OCI-LY7 (cell line): ENCODE measurements at regions of chr3 and their contacts with region 1.

Region 1: GRCh38 chr3:188154014-188154808 is at the start of gene LPP:
- DNase-seq: peak; percentile 79
- H3K4me3 ChIP-seq: peak within 1 kb of the TSS; percentile 82
- H3K27ac ChIP-seq: peak within 1 kb of the TSS; percentile 41
- H3K4me1 ChIP-seq: peaks cover 35% of the 10 kb centered on the region
- CTCF ChIP-seq: no peak; the same call in 1 of the 2 replicates
- total RNA-seq, gene LPP: 7.4 and 10.9 TPM in 2 replicates

Region 2: GRCh38 chr3:188000361-188000861 is 153.8 kb before region 1 on chr3:
- CTCF ChIA-PET with region 1: no interaction called
- POLR2A ChIA-PET with region 1: no interaction called
- intact Hi-C with region 1: loop called (anchors 5 kb)
- DNase-seq: peak; percentile 82
- H3K4me3 ChIP-seq: peak overlapping the region; percentile 60
- H3K27ac ChIP-seq: peak overlapping the region; percentile 96
- H3K4me1 ChIP-seq: peaks cover 83% of the 10 kb centered on the region
- CTCF ChIP-seq: no peak

Region 3: GRCh38 chr3:188137051-188137450 is 17.2 kb before region 1 on chr3:
- CTCF ChIA-PET with region 1: no interaction called
- POLR2A ChIA-PET with region 1: interaction called, 15 read pairs
- intact Hi-C with region 1: no loop called
- DNase-seq: peak; percentile 49
- H3K4me3 ChIP-seq: no peak overlapping the region
- H3K27ac ChIP-seq: no peak overlapping the region
- H3K4me1 ChIP-seq: peaks cover 14% of the 10 kb centered on the region
- CTCF ChIP-seq: no peak

Region 4: DNA sequence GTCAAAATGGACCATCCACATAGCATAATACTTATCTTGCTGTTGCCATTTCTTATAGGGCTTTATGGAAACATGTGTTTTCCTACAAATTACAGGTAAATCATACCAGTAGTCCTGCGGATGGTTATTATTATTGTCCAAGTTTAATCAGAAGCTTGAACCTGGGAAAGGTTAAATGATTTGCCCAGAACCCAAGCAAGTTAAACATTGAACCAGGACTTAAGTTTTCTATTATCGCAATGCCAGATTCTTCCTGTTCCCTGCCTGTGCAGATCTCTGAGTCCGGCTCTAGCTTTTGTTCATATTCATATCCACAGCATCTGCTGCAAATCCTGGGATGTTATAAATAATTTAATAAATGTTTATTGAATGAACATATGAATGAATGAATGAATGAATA is 12.2 kb after region 1 on chr3:
- CTCF ChIA-PET with region 1: no interaction called
- POLR2A ChIA-PET with region 1: interaction called, 10 read pairs
- intact Hi-C with region 1: no loop called
- DNase-seq: no peak
- H3K4me3 ChIP-seq: no peak overlapping the region
- H3K27ac ChIP-seq: no peak overlapping the region
- H3K4me1 ChIP-seq: peaks cover 41% of the 10 kb centered on the region
- CTCF ChIP-seq: no peak

Region 5: GRCh38 chr3:188214442-188214841 is 60.2 kb after region 1 on chr3:
- CTCF ChIA-PET with region 1: no interaction called
- POLR2A ChIA-PET with region 1: interaction called, 3 read pairs
- intact Hi-C with region 1: loop called (anchors 5 kb)
- DNase-seq: peak; percentile 82
- H3K4me3 ChIP-seq: peak overlapping the region; percentile 47
- H3K27ac ChIP-seq: peak overlapping the region; percentile 98
- H3K4me1 ChIP-seq: peaks cover 80% of the 10 kb centered on the region
- CTCF ChIP-seq: no peak

Region 6: GRCh38 chr3:188234132-188234531 is 79.9 kb after region 1 on chr3:
- CTCF ChIA-PET with region 1: no interaction called
- POLR2A ChIA-PET with region 1: interaction called, 4 read pairs
- intact Hi-C with region 1: loop called (anchors 2 kb)
- DNase-seq: no peak
- H3K4me3 ChIP-seq: no peak overlapping the region
- H3K27ac ChIP-seq: no peak overlapping the region
- H3K4me1 ChIP-seq: peaks cover 77% of the 10 kb centered on the region
- CTCF ChIP-seq: no peak